CD4-positive, alpha-beta T cell (primary cell): ENCODE measurements at regions of chr3 and their contacts with region 1.

Region 1: GRCh38 chr3:107235928-107236315 is 141.3 kb upstream of the CCDC54 start:
- DNase-seq: peak in 11 of 14 experiments; percentile 4 to 82 (median 39)
- ATAC-seq: peak; percentile 71
- H3K4me3 ChIP-seq: peak overlapping the region; percentile 30
- H3K4me3 Mint-ChIP-seq: peak overlapping the region; percentile 46
- H3K27ac ChIP-seq: no peak overlapping the region
- H3K27ac Mint-ChIP-seq: no peak overlapping the region
- H3K4me1 ChIP-seq: peaks cover 9% of the 10 kb centered on the region
- H3K4me1 Mint-ChIP-seq: peaks cover 7% of the 10 kb centered on the region
- H3K27me3 ChIP-seq: no peaks in the 10 kb centered on the region
- H3K27me3 Mint-ChIP-seq: peaks cover 2% of the 10 kb centered on the region
- CTCF ChIP-seq: peak; percentile 93

Region 2: GRCh38 chr3:107522510-107523288 is 286.8 kb after region 1 on chr3 and contains the start of gene BBX:
- CTCF ChIA-PET with region 1: no interaction called
- POLR2A ChIA-PET with region 1: no interaction called
- intact Hi-C with region 1: loop called in 1 of 2 experiments (anchors 5 kb)
- DNase-seq: peak; percentile 85 to 97 (median 92)
- ATAC-seq: peak; percentile 89
- H3K4me3 ChIP-seq: peak within 1 kb of the TSS; percentile 67
- H3K4me3 Mint-ChIP-seq: peak within 1 kb of the TSS; percentile 99
- H3K27ac ChIP-seq: peak within 1 kb of the TSS; percentile 77 to 85
- H3K27ac Mint-ChIP-seq: peak within 1 kb of the TSS; percentile 95
- H3K4me1 ChIP-seq: peaks cover 19% of the 10 kb centered on the region
- H3K4me1 Mint-ChIP-seq: peaks cover 26% of the 10 kb centered on the region
- H3K27me3 ChIP-seq: no peaks in the 10 kb centered on the region
- H3K27me3 Mint-ChIP-seq: no peaks in the 10 kb centered on the region
- CTCF ChIP-seq: no peak
- total RNA-seq, gene BBX: 79.7 to 81.8 TPM

Region 3: GRCh38 chr3:107543666-107544065 is 307.7 kb after region 1 on chr3:
- CTCF ChIA-PET with region 1: interaction called, 5 read pairs
- POLR2A ChIA-PET with region 1: no interaction called
- intact Hi-C with region 1: loop called in 1 of 2 experiments (anchors 5 kb)
- DNase-seq: peak in 4 of 14 experiments; percentile 9 to 47 (median 27)
- ATAC-seq: no peak
- H3K4me3 ChIP-seq: no peak overlapping the region
- H3K4me3 Mint-ChIP-seq: no peak overlapping the region
- H3K27ac ChIP-seq: no peak overlapping the region
- H3K27ac Mint-ChIP-seq: no peak overlapping the region
- H3K4me1 ChIP-seq: peaks cover 2% of the 10 kb centered on the region
- H3K4me1 Mint-ChIP-seq: peaks cover 71% of the 10 kb centered on the region
- H3K27me3 ChIP-seq: no peaks in the 10 kb centered on the region
- H3K27me3 Mint-ChIP-seq: no peaks in the 10 kb centered on the region
- CTCF ChIP-seq: no peak

Region 4: GRCh38 chr3:107660306-107660976 is 424.5 kb after region 1 on chr3:
- CTCF ChIA-PET with region 1: interaction called, 3 read pairs
- POLR2A ChIA-PET with region 1: no interaction called
- intact Hi-C with region 1: loop called (anchors 5 to 10 kb)
- DNase-seq: peak in 3 of 14 experiments; percentile 48 to 70 (median 60)
- ATAC-seq: no peak
- H3K4me3 ChIP-seq: no peak overlapping the region
- H3K4me3 Mint-ChIP-seq: no peak overlapping the region
- H3K27ac ChIP-seq: no peak overlapping the region
- H3K27ac Mint-ChIP-seq: no peak overlapping the region
- H3K4me1 ChIP-seq: peaks cover 7% of the 10 kb centered on the region
- H3K4me1 Mint-ChIP-seq: peaks cover 45% of the 10 kb centered on the region
- H3K27me3 ChIP-seq: no peaks in the 10 kb centered on the region
- H3K27me3 Mint-ChIP-seq: no peaks in the 10 kb centered on the region
- CTCF ChIP-seq: peak; percentile 86

Region 5: GRCh38 chr3:107846279-107846852 is 610.4 kb after region 1 on chr3:
- CTCF ChIA-PET with region 1: no interaction called
- POLR2A ChIA-PET with region 1: no interaction called
- intact Hi-C with region 1: loop called (anchors 5 to 10 kb)
- DNase-seq: peak in 9 of 14 experiments; percentile 4 to 59 (median 12)
- ATAC-seq: no peak
- H3K4me3 ChIP-seq: no peak overlapping the region
- H3K4me3 Mint-ChIP-seq: no peak overlapping the region
- H3K27ac ChIP-seq: no peak overlapping the region
- H3K27ac Mint-ChIP-seq: no peak overlapping the region
- H3K4me1 ChIP-seq: no peaks in the 10 kb centered on the region
- H3K4me1 Mint-ChIP-seq: no peaks in the 10 kb centered on the region
- H3K27me3 ChIP-seq: no peaks in the 10 kb centered on the region
- H3K27me3 Mint-ChIP-seq: no peaks in the 10 kb centered on the region
- CTCF ChIP-seq: peak; percentile 30

Region 6: GRCh38 chr3:108406661-108407206 is 1170.8 kb after region 1 on chr3:
- CTCF ChIA-PET with region 1: no interaction called
- POLR2A ChIA-PET with region 1: no interaction called
- intact Hi-C with region 1: loop called in 1 of 2 experiments (anchors 2 kb)
- DNase-seq: peak in 5 of 14 experiments; percentile 3 to 76 (median 67)
- ATAC-seq: peak; percentile 96
- H3K4me3 ChIP-seq: no peak overlapping the region
- H3K4me3 Mint-ChIP-seq: no peak overlapping the region
- H3K27ac ChIP-seq: no peak overlapping the region
- H3K27ac Mint-ChIP-seq: no peak overlapping the region
- H3K4me1 ChIP-seq: no peaks in the 10 kb centered on the region
- H3K4me1 Mint-ChIP-seq: no peaks in the 10 kb centered on the region
- H3K27me3 ChIP-seq: no peaks in the 10 kb centered on the region
- H3K27me3 Mint-ChIP-seq: no peaks in the 10 kb centered on the region
- CTCF ChIP-seq: peak; percentile 84

Region 7: DNA sequence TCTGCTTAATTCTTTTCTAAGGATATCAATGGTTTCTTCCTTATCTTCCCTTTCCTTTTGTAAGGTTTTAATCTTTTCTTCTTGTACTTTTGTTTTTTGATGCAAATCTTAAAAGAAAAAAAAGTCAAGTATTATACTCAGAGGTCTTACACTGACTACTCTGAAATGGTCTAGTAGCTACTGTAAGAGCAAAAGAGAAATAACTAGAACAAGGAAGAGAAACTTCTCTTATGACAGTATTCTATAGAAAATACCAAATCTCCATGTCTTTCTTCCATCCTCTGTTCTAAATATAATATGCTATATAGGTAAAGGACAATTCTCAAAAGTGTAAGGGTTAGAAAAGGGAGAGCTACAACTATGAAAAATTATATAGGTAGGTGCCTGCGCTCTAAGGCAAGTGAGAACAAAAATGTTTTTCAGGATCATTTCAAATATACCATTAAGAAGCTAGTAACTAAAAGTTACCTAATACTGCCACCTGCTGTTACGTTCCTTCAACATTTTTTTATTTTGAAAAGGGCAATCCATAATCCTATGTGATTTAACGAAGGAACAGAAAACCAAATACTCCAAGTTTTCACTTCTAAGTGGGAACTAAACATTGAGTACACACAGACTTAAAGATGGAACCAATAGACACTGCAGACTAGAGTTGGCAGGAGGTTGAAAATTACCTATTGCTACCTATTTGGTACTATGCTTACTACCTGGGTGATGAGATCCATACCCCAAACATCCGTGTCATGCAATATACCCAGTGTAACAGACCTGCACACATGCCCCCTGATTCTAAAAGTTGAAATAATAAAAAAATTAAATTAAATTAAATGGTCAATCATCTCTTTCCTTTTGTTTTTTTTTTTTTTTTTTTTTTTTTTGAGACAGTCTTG is 1316.6 kb after region 1 on chr3:
- CTCF ChIA-PET with region 1: no interaction called
- POLR2A ChIA-PET with region 1: no interaction called
- intact Hi-C with region 1: loop called (anchors 2 to 5 kb)
- DNase-seq: peak in 4 of 14 experiments; percentile 9 to 68 (median 62)
- ATAC-seq: no peak
- H3K4me3 ChIP-seq: no peak overlapping the region
- H3K4me3 Mint-ChIP-seq: no peak overlapping the region
- H3K27ac ChIP-seq: no peak overlapping the region
- H3K27ac Mint-ChIP-seq: no peak overlapping the region
- H3K4me1 ChIP-seq: no peaks in the 10 kb centered on the region
- H3K4me1 Mint-ChIP-seq: no peaks in the 10 kb centered on the region
- H3K27me3 ChIP-seq: no peaks in the 10 kb centered on the region
- H3K27me3 Mint-ChIP-seq: no peaks in the 10 kb centered on the region
- CTCF ChIP-seq: peak; percentile 62